MCF 10A (cell line): ENCODE measurements at regions of chr10 and their contacts with region 1.

Region 1: GRCh38 chr10:58513188-58514110 is 777 bp downstream of the BICC1 start:
- DNase-seq: peak; percentile 73
- H3K4me3 Mint-ChIP-seq: peak overlapping the region; percentile 74
- H3K27ac Mint-ChIP-seq: peak overlapping the region; percentile 89
- H3K4me1 Mint-ChIP-seq: peaks cover 27% of the 10 kb centered on the region
- H3K27me3 Mint-ChIP-seq: no peaks in the 10 kb centered on the region
- CTCF ChIP-seq: no peak

Region 2: DNA sequence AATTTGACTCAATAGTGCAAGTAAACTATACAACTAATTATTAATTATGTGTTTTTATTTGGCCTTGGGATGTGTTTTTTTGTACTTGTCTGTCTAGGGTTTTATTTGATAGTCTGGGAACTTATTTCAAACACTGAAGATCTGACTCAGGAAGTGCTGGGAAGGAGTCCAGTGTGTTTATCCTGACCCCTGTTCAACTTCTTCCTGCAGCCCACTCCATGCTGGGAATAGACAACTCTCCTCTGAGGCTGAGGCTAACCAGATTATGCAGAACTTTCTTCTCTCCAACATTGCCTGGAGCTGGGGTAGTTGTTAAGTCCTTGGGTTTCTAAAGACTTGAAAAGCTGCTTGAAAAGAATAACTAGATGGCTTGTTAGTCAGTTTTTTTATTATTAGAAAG is 237.5 kb before region 1 on chr10:
- CTCF ChIA-PET with region 1: no interaction called
- POLR2A ChIA-PET with region 1: no interaction called
- intact Hi-C with region 1: no loop called
- DNase-seq: no peak
- H3K4me3 Mint-ChIP-seq: no peak overlapping the region
- H3K27ac Mint-ChIP-seq: no peak overlapping the region
- H3K4me1 Mint-ChIP-seq: peaks cover 36% of the 10 kb centered on the region
- H3K27me3 Mint-ChIP-seq: no peaks in the 10 kb centered on the region
- CTCF ChIP-seq: no peak

Region 3: GRCh38 chr10:58475322-58476277 is 37.8 kb before region 1 on chr10:
- CTCF ChIA-PET with region 1: no interaction called
- POLR2A ChIA-PET with region 1: interaction called, 14 read pairs
- intact Hi-C with region 1: no loop called
- DNase-seq: peak; percentile 59
- H3K4me3 Mint-ChIP-seq: peak overlapping the region; percentile 49
- H3K27ac Mint-ChIP-seq: peak overlapping the region; percentile 94
- H3K4me1 Mint-ChIP-seq: peaks cover 21% of the 10 kb centered on the region
- H3K27me3 Mint-ChIP-seq: no peaks in the 10 kb centered on the region
- CTCF ChIP-seq: no peak

Region 4: DNA sequence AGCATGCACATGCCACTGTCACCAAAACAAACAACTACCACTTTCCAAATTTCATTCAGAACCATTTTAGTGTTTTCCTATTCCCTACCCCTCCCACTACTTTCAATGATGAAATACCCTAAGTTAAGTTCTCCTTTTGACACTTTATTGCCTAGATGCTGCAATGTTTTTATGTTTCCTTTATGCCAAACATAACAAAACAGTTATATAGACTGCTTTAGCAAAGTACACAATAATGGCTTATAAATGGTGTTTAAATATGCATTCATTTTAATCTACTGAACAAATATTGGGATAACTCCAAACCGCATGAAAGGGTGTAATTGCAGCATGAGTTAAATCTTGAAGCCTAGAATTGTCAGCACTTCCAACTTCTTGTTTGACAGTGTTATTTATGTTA is 732.2 kb after region 1 on chr10:
- CTCF ChIA-PET with region 1: no interaction called
- POLR2A ChIA-PET with region 1: no interaction called
- intact Hi-C with region 1: no loop called
- DNase-seq: no peak
- H3K4me3 Mint-ChIP-seq: no peak overlapping the region
- H3K27ac Mint-ChIP-seq: no peak overlapping the region
- H3K4me1 Mint-ChIP-seq: no peaks in the 10 kb centered on the region
- H3K27me3 Mint-ChIP-seq: peaks cover 75% of the 10 kb centered on the region
- CTCF ChIP-seq: no peak